ENCODE measurements at regions of chr17 and their contacts with region 1.

Region 1: DNA sequence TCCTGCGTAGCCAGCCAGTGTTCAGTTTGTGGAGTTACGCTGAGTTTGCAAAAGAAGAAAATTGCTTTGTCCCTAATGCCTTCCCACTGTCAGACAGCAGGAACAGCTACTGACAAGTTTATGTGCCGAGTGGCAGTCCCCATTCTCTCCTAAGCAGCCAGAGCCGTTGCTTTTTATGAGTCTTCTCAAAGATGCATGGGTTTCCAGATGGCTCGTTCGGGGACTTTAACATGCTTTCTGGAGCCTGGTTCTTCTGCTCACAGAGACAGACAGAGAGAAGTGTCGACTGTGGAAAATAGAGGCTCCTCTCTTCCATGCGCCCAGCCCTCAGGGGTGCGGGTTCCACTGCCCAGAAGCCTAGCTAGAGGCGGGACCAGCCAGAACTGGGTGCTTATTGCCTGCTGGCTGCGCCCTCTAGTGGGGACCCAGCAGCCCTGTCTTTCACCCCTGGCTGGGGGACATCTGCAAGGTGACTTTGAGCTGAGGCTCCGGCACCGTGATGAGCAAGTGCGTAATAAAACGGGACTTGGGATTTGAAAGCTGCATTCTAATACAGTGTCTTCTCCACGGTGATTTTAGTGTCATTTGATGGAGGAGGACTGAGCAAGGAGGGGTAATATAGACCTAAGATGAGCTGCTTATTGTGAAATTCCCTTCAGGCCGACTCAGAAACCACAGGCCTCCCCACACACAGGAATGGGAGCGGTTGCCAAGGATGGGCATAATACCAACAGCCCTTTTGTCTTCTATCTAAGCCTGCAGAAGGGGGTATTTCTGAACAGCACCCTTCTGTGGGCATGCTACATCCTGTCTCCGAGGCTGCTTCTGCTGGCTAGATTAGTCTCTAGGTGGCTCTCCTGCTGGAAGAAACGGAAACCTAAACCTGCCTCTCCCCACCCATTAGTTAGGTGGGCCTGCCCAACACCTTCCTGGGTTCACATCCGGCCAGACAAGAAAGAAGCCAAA is 73.1 kb downstream of the CCDC182 start:
- H3K4me3 ChIP-seq: no peak overlapping the region
- H3K27ac ChIP-seq: no peak overlapping the region
- H3K4me1 ChIP-seq: peaks cover 8% of the 10 kb centered on the region
- CTCF ChIP-seq: peak; percentile 82

Region 2: DNA sequence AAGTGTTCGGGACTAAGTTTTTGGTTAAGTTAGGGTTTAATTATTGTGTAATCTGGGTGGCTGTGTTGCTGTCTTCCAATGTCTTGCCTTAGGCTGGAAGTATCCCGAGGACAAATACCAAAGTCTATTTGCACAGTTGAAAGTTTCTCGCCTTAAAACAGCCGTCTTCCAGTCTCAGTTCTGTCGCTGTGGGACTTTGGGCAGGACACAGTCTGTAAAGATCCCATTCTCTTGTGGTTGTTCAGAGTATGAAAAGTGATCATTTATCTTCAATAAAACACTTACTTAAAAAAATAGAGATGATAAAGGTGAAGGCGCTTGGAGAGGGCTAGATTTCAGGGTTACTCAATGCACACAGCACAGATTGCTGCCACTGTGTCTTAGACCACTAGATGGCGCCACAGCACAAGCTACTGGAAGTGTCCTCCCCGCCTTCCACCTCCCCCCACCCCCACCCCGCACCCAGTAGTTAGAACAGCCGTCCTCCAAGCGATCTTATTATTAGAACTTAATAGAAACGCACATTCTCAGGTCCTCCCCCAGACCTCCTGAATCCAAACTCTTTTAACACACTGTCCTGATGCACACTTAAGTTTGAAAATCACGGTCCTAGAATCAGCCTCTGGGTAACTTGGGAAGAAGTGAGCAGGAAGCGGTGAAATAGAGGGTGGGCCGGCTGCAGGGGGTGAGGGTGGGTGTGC is 541.0 kb before region 1 on chr17:
- CTCF ChIA-PET with region 1: interaction called, 10 read pairs
- POLR2A ChIA-PET with region 1: interaction called, 4 read pairs
- H3K4me3 ChIP-seq: peak overlapping the region; percentile 33
- H3K27ac ChIP-seq: no peak overlapping the region
- H3K4me1 ChIP-seq: no peaks in the 10 kb centered on the region; the same call in 1 of the 2 replicates
- CTCF ChIP-seq: peak; percentile 67

Region 3: GRCh38 chr17:57605675-57606105 is 66.3 kb before region 1 on chr17:
- CTCF ChIA-PET with region 1: interaction called, 80 read pairs
- POLR2A ChIA-PET with region 1: no interaction called
- H3K4me3 ChIP-seq: no peak overlapping the region
- H3K27ac ChIP-seq: peak overlapping the region; percentile 54
- H3K4me1 ChIP-seq: peaks cover 20% of the 10 kb centered on the region
- CTCF ChIP-seq: no peak

Region 4: DNA sequence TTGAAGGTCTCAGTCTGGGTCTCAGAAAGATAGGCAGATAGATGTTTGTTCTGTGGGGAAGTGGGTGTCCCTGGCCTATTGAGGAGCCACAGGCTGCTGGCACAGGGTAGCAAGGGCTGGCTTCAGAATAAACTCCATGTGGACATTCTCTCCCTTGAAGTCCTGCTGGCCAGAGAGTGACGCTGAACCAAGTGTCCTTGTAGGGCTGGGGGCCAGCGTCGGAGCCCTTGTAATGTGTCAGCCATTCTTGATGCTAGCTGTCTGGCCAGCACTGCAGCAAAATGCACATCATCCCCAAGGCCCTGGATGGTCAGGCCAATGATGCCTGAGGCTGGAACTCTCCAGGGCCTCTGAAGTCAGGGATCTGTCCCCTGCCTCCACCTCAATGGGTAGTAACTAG is 30.2 kb before region 1 on chr17:
- CTCF ChIA-PET with region 1: interaction called, 10 read pairs
- POLR2A ChIA-PET with region 1: no interaction called
- H3K4me3 ChIP-seq: no peak overlapping the region
- H3K27ac ChIP-seq: no peak overlapping the region
- H3K4me1 ChIP-seq: no peaks in the 10 kb centered on the region
- CTCF ChIP-seq: no peak

Region 5: DNA sequence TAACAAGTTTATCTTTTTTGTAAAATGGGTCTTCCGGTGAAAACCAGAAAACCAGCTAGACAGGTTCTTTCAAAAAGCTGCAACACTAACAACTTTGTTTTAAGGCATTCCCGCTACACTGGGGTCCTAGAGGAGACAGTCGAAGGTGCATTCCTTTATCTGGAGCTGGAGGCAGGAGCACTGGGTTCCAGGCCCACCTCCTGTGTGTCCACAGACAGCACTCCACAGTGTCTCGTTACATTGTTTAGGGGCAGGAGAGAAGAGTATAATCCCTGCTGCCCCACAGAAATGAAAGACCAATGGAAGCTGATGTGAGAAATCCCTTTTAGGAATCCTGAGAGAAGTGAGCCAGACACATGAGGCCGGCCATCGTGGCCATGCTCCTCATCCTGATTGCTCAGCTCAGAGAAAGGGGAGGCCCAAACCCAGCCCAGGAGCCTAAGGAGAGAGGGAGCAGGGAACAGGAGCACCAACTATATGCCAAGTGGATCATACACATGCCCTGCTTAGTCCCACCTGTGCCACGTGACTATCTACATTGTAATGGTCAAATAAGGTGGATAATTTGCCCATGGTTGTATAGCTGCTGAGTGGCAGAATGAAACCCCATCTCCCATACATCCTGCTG is 13.7 kb after region 1 on chr17:
- CTCF ChIA-PET with region 1: interaction called, 54 read pairs
- POLR2A ChIA-PET with region 1: no interaction called
- H3K4me3 ChIP-seq: no peak overlapping the region
- H3K27ac ChIP-seq: no peak overlapping the region
- H3K4me1 ChIP-seq: no peaks in the 10 kb centered on the region
- CTCF ChIP-seq: no peak

Region 6: GRCh38 chr17:57707851-57708291 is 35.9 kb after region 1 on chr17:
- CTCF ChIA-PET with region 1: interaction called, 11 read pairs
- POLR2A ChIA-PET with region 1: no interaction called
- H3K4me3 ChIP-seq: no peak overlapping the region
- H3K27ac ChIP-seq: no peak overlapping the region
- H3K4me1 ChIP-seq: no peaks in the 10 kb centered on the region
- CTCF ChIP-seq: no peak

Region 7: GRCh38 chr17:57833179-57833939 is 161.4 kb after region 1 on chr17:
- CTCF ChIA-PET with region 1: interaction called, 18 read pairs
- POLR2A ChIA-PET with region 1: no interaction called
- H3K4me3 ChIP-seq: no peak overlapping the region
- H3K27ac ChIP-seq: peak overlapping the region; percentile 4; the same call in 1 of the 2 replicates
- H3K4me1 ChIP-seq: no peaks in the 10 kb centered on the region; the same call in 1 of the 2 replicates
- CTCF ChIP-seq: peak; percentile 92